ENCODE measurements at regions of chr20 and their contacts with region 1.

Region 1: DNA sequence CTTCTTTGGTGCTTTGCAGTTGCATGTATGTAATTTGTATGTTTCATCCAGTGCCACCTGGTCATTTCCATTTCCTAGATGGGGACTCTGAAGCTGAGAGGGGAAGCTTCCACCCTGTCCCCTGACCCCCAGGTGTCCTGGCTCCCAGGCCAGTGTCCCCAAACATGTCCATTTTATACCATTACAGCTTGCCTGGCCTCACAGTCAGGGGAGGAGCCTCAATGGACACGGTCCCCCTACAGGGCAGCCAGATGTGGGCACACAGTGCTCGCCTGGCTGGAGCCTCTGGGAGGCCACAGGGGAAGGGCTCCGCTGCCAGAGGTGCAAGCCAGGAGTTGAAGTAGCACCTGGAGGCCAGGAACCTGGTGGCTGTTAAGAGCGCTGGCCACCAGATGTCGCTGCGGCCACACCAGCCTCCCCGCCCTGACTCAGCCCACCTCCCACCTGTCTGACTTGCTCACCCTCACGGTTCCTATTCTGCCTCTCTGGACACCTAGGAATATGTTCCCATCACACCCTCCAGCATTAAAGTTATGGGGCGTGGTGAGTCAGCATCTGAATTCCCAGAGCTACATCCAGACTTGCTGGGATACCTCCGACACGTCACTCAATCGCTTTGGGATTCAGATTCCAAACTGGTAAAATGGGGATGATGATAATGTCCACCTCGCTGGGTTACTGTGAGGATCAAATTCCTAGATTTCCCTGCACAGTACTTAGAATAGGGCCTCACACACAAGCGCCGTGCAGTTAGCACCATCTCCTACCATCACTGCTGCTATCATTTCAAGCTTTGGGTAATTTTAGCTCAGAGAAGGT is 107.4 kb downstream of the SULF2 start:
- DNase-seq: peak; percentile 72
- H3K4me3 Mint-ChIP-seq: no peak overlapping the region
- H3K27ac Mint-ChIP-seq: no peak overlapping the region
- H3K4me1 Mint-ChIP-seq: no peaks in the 10 kb centered on the region
- H3K27me3 Mint-ChIP-seq: no peaks in the 10 kb centered on the region

Region 2: DNA sequence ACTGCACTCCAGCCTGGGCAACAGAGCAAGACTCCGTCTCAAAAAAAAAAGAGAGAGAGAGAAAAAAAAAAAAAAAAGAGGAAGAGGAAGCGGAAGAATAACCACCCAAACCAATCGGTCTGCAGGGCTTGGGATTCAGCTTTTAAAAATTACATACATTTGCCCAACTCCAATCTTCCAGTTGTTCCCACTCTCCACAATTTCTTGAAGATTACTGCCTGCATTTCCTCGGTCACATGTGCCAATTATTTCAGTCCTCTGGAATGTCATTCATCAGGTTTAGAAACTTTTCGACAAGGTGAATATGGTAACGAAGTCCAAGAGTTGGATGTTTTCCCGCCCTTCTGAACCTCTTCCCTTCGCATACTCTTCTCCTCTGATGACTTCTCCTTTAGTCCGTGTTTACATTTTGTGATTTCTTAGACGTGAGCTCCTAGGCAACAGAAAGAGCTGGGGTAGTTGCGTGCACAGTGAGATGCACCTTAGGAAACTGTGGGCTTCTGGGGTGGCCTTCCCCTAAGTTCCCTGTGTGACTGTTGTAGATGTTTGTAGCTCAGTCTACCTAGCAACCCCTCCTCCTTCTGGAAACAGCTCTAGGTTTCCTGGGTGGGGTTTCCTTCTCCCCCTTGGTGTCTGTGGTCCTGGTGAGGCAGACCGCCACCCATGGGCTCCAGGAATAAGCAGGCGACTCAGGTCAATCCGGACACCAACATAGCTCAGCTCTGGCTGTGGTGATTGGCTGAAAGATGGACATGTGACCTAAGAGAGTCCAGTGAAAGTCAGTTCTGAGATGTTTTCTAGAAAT is 239.1 kb before region 1 on chr20:
- CTCF ChIA-PET with region 1: no interaction called
- DNase-seq: peak; percentile 33
- H3K4me3 Mint-ChIP-seq: no peak overlapping the region
- H3K27ac Mint-ChIP-seq: no peak overlapping the region
- H3K4me1 Mint-ChIP-seq: peaks cover 20% of the 10 kb centered on the region
- H3K27me3 Mint-ChIP-seq: peaks cover 7% of the 10 kb centered on the region

Region 3: GRCh38 chr20:47576516-47577033 is 101.3 kb before region 1 on chr20:
- CTCF ChIA-PET with region 1: no interaction called
- DNase-seq: peak; percentile 37
- H3K4me3 Mint-ChIP-seq: peak overlapping the region; percentile 7
- H3K27ac Mint-ChIP-seq: no peak overlapping the region
- H3K4me1 Mint-ChIP-seq: peaks cover 70% of the 10 kb centered on the region
- H3K27me3 Mint-ChIP-seq: no peaks in the 10 kb centered on the region

Region 4: GRCh38 chr20:47691625-47692024 is 13.8 kb after region 1 on chr20:
- CTCF ChIA-PET with region 1: interaction called, 44 read pairs
- DNase-seq: no peak
- H3K4me3 Mint-ChIP-seq: no peak overlapping the region
- H3K27ac Mint-ChIP-seq: no peak overlapping the region
- H3K4me1 Mint-ChIP-seq: peaks cover 13% of the 10 kb centered on the region
- H3K27me3 Mint-ChIP-seq: peaks cover 16% of the 10 kb centered on the region

Region 5: DNA sequence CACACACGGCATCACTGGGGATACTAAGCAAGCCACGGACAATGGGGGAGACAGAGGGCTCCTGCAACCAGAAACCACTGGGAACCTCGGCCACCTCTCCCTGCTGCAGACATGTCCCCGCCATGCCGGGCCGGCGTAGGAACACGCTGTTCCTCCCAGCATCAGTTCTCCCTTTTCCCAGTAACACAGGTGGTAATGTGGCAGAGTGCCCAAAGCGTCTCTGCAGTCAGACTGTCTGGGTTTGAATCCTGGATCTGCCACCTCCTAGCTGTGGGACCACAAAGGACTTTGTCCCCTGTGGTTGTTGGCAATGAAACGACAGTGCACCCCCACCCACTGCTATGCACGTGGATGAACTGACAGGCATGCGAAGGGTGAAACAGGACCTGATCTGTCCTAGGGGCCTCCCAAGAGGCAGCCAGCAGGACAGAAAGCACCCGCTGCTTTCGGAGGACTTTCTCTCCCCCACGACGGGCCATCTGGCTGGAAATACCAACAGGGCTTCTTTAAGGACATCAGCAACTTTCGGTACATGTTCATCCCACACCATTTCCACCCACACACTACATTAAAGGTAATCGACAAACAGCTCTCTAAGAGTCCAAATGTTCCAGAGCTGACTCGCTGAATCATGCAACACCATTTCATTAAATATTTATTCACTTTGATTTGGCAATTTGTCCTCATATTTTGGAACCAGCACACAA is 33.4 kb after region 1 on chr20:
- CTCF ChIA-PET with region 1: interaction called, 24 read pairs
- DNase-seq: no peak
- H3K4me3 Mint-ChIP-seq: no peak overlapping the region
- H3K27ac Mint-ChIP-seq: no peak overlapping the region
- H3K4me1 Mint-ChIP-seq: no peaks in the 10 kb centered on the region
- H3K27me3 Mint-ChIP-seq: peaks cover 38% of the 10 kb centered on the region